ENCODE measurements at regions of chr7 and their contacts with region 1.

Region 1: GRCh38 chr7:139829025-139829774 is at the start of gene TBXAS1:
- DNase-seq: peak; percentile 64
- H3K4me3 Mint-ChIP-seq: peak within 1 kb of the TSS; percentile 73
- H3K27ac Mint-ChIP-seq: peak within 1 kb of the TSS; percentile 99
- H3K4me1 Mint-ChIP-seq: peaks cover 52% of the 10 kb centered on the region
- H3K27me3 Mint-ChIP-seq: no peaks in the 10 kb centered on the region
- CTCF ChIP-seq: no peak
- total RNA-seq, gene TBXAS1: 31.2 and 33.0 TPM in 2 replicates

Region 2: GRCh38 chr7:138797841-138798271 is 1031.3 kb before region 1 on chr7 and contains the starts of genes ATP6V0A4 and TMEM213:
- CTCF ChIA-PET with region 1: no interaction called
- intact Hi-C with region 1: no loop called
- DNase-seq: peak; percentile 72
- H3K4me3 Mint-ChIP-seq: peak within 1 kb of the TSS; percentile 65
- H3K27ac Mint-ChIP-seq: peak within 1 kb of the TSS; percentile 49
- H3K4me1 Mint-ChIP-seq: peaks cover 51% of the 10 kb centered on the region
- H3K27me3 Mint-ChIP-seq: no peaks in the 10 kb centered on the region
- CTCF ChIP-seq: no peak
- total RNA-seq, gene ATP6V0A4: 5.6 and 7.7 TPM in 2 replicates
- total RNA-seq, gene TMEM213: 9.8 and 11.3 TPM in 2 replicates

Region 3: GRCh38 chr7:139645572-139646523 is 183.4 kb before region 1 on chr7:
- CTCF ChIA-PET with region 1: no interaction called
- intact Hi-C with region 1: loop called (anchors 2 kb)
- DNase-seq: peak; percentile 89
- H3K4me3 Mint-ChIP-seq: no peak overlapping the region
- H3K27ac Mint-ChIP-seq: no peak overlapping the region
- H3K4me1 Mint-ChIP-seq: peaks cover 8% of the 10 kb centered on the region
- H3K27me3 Mint-ChIP-seq: no peaks in the 10 kb centered on the region
- CTCF ChIP-seq: peak; percentile 85

Region 4: GRCh38 chr7:139714163-139714901 is 114.9 kb before region 1 on chr7:
- CTCF ChIA-PET with region 1: no interaction called
- intact Hi-C with region 1: no loop called
- DNase-seq: no peak
- H3K4me3 Mint-ChIP-seq: no peak overlapping the region
- H3K27ac Mint-ChIP-seq: no peak overlapping the region
- H3K4me1 Mint-ChIP-seq: no peaks in the 10 kb centered on the region
- H3K27me3 Mint-ChIP-seq: no peaks in the 10 kb centered on the region
- CTCF ChIP-seq: no peak

Region 5: GRCh38 chr7:139915864-139916716 is 86.9 kb after region 1 on chr7:
- CTCF ChIA-PET with region 1: interaction called, 3 read pairs
- intact Hi-C with region 1: loop called (anchors 1 kb)
- DNase-seq: peak; percentile 67
- H3K4me3 Mint-ChIP-seq: no peak overlapping the region
- H3K27ac Mint-ChIP-seq: peak overlapping the region; percentile 44
- H3K4me1 Mint-ChIP-seq: peaks cover 23% of the 10 kb centered on the region
- H3K27me3 Mint-ChIP-seq: no peaks in the 10 kb centered on the region
- CTCF ChIP-seq: no peak

Region 6: DNA sequence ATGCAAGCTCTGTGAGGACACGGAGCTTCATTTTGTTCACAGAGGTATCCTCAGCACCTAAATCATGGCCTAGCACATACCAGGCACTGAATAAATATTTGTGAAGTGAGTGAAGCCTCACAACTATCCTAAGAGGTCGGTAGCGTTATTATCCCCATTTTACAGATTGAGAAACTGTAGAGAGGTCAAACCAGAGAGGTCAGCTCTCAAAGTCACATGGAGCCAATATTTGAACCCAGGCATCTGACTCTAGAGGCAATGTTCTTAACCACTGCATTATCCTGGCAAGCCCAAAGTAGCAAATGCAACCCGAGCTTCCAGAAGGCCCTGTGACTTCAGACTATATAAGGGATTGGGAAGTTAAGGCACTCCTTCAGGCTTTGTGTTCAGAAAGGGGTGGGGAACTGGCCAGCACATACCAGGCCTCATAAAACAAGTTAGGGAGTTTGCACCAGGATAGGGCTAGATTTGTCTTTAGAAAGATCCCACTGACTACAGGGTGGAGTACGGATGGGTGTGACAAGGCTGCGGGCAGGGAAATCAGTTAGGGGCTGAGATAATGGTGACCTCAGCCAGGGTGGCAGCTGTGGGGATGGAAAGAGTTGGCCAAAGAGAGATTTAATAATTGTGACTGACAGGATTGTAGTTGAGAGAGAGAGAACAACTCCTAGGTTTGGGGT is 101.2 kb after region 1 on chr7:
- CTCF ChIA-PET with region 1: no interaction called
- intact Hi-C with region 1: no loop called
- DNase-seq: no peak
- H3K4me3 Mint-ChIP-seq: no peak overlapping the region
- H3K27ac Mint-ChIP-seq: no peak overlapping the region
- H3K4me1 Mint-ChIP-seq: peaks cover 13% of the 10 kb centered on the region
- H3K27me3 Mint-ChIP-seq: no peaks in the 10 kb centered on the region
- CTCF ChIP-seq: no peak

Region 7: GRCh38 chr7:139972029-139972428 is 142.8 kb after region 1 on chr7:
- CTCF ChIA-PET with region 1: no interaction called
- intact Hi-C with region 1: no loop called
- DNase-seq: no peak
- H3K4me3 Mint-ChIP-seq: no peak overlapping the region
- H3K27ac Mint-ChIP-seq: no peak overlapping the region
- H3K4me1 Mint-ChIP-seq: no peaks in the 10 kb centered on the region
- H3K27me3 Mint-ChIP-seq: no peaks in the 10 kb centered on the region
- CTCF ChIP-seq: no peak

Measured in Calu3 (cell line).